ENCODE measurements at regions of chr17 and their contacts with region 1.

Region 1: DNA sequence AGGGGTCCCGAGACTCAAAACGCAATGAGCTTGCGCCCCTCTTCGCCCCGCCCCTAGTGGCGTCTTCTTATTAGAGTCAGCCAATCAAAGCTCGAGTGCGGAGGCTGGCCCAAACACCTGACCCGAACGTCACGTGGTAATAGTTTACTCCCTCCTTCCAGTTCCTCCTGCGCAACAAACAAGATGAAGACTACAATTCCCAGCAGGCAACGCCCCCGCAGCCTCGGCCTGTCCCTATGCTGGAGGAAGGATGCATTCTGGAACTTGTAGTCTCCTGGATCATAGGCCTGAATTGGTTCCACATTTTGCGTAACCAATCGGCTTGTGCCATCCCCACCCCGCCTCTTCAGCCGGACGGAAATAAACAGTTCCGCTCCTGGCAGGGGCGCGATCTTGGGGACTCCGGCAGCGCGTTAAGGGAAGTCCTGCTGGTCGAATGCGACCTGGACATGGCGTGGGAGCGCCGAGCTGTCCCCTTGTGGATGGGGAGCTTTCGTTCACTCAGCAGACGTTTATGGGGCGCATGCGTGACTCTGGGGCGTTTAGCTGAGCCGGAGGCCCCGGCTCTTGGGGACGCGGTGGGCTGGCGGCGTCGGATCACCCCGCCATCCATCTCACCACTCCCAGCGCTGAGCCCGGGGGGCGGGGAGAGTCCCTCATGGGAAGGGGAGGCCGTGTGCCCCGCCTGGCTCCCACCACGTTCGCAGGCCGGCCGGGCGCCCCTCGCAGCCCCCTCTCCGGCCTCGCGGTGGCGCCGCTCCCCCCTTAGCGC is at the start of gene WBP2:
- DNase-seq: peak; percentile 100
- ATAC-seq: peak; percentile 92
- H3K4me3 ChIP-seq: peak within 1 kb of the TSS; percentile 81 to 90 (median 90)
- H3K27ac ChIP-seq: peak within 1 kb of the TSS; percentile 89
- H3K4me1 ChIP-seq: peaks cover 53% of the 10 kb centered on the region
- H3K27me3 ChIP-seq: no peaks in the 10 kb centered on the region; a peak in 1 of 5 replicates
- CTCF ChIP-seq: peak; percentile 80
- EP300 ChIP-seq: peak in 1 of 2 experiments; percentile 63; a peak in 2 of 4 replicates
- POLR2A ChIP-seq: peak; percentile 89 to 99
- RAD21 ChIP-seq: peak; percentile 90
- total RNA-seq, gene WBP2: 28.2 and 29.2 TPM in 2 replicates

Region 2: GRCh38 chr17:75764711-75765421 is 90.6 kb before region 1 on chr17 and contains the start of gene GALK1:
- CTCF ChIA-PET with region 1: no interaction called
- POLR2A ChIA-PET with region 1: interaction called, 28 read pairs
- in situ Hi-C with region 1: no loop called
- intact Hi-C with region 1: no loop called
- DNase-seq: peak; percentile 59
- ATAC-seq: peak; percentile 73
- H3K4me3 ChIP-seq: peak within 1 kb of the TSS; percentile 77 to 87 (median 78)
- H3K27ac ChIP-seq: peak within 1 kb of the TSS; percentile 79
- H3K4me1 ChIP-seq: peaks cover 60% of the 10 kb centered on the region
- H3K27me3 ChIP-seq: no peaks in the 10 kb centered on the region
- CTCF ChIP-seq: peak; percentile 78
- EP300 ChIP-seq: no peak
- POLR2A ChIP-seq: peak in 1 of 2 experiments; percentile 73; a peak in 2 of 4 replicates
- RAD21 ChIP-seq: peak; percentile 46
- total RNA-seq, gene GALK1: 93.6 and 95.6 TPM in 2 replicates

Region 3: DNA sequence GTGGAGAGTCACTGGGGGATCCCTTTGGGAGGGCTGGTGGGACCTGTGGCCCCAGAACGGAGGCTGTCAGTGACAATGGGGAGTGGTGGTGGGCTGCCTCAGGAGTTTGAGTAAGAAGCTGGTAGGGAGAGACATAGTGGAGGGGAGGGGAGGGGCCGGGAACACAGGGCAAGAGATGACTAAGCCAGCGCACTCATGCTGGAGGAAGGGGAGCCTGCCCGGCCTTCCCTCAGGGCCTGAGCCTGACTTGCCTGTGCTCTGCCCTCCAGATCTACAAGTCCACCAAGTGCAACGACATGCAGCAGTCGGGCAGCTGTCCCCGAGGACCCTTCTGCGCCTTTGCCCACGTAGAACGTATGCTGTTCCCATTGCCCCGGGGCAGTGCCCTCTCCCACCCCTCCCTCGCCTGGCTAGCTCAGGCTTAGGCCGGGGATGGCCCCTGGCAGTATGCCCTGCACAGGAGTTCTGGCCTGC is 40.6 kb before region 1 on chr17:
- CTCF ChIA-PET with region 1: no interaction called
- POLR2A ChIA-PET with region 1: no interaction called
- in situ Hi-C with region 1: no loop called
- intact Hi-C with region 1: loop called (anchors 1 kb)
- DNase-seq: no peak
- ATAC-seq: no peak
- H3K4me3 ChIP-seq: no peak overlapping the region
- H3K27ac ChIP-seq: no peak overlapping the region
- H3K4me1 ChIP-seq: no peaks in the 10 kb centered on the region
- H3K27me3 ChIP-seq: no peaks in the 10 kb centered on the region
- CTCF ChIP-seq: no peak
- EP300 ChIP-seq: no peak
- POLR2A ChIP-seq: no peak
- RAD21 ChIP-seq: no peak

Region 4: DNA sequence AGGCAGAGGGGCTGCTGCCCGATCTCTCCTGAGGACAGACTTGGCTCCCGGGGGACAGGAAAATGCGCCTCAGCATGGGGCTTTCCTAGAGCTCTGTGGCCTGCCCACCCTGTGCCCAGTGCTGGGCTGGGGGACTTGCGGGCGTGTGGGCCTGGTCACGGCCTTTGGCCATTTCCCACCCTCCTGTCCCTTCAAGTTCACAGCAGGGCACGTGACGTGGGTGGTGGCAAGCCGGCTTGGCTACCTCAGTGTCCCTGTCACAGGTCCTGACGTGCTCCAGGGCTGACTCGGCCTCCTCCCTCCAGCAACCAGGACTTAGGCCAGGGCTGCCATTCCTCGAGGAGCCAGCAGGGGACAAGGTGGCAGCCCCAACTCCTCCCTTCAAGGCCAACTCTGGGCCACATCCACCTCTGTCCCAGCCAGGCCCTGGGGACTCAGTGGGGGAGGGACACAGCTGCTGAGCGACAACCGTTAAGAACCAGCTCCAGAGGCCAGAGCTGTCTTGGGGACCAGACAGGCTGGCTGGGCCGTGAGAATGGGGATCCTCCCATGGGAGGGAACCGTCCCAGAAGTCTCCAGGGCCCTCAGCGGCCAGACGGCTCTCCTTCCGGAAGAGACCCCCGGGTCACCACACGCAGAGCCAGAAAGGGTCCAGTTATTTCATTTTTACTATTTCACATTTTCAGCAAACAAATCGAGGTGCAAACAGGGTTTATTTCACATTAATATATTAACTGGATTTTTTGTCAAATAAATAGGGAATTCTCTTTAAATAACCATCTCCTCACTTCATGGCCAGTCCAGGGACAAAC is 10.2 kb before region 1 on chr17:
- CTCF ChIA-PET with region 1: interaction called, 7 read pairs
- POLR2A ChIA-PET with region 1: interaction called, 220 read pairs
- in situ Hi-C with region 1: no loop called
- intact Hi-C with region 1: no loop called
- DNase-seq: peak; percentile 86
- ATAC-seq: peak; percentile 65
- H3K4me3 ChIP-seq: peak overlapping the region; percentile 66 to 84 (median 66)
- H3K27ac ChIP-seq: peak overlapping the region; percentile 79
- H3K4me1 ChIP-seq: peaks cover 70% of the 10 kb centered on the region
- H3K27me3 ChIP-seq: no peaks in the 10 kb centered on the region
- CTCF ChIP-seq: peak; percentile 90
- EP300 ChIP-seq: peak in 1 of 2 experiments; percentile 31; a peak in 1 of 4 replicates
- POLR2A ChIP-seq: peak in 1 of 2 experiments; percentile 67; a peak in 2 of 4 replicates
- RAD21 ChIP-seq: peak; percentile 82

Region 5: DNA sequence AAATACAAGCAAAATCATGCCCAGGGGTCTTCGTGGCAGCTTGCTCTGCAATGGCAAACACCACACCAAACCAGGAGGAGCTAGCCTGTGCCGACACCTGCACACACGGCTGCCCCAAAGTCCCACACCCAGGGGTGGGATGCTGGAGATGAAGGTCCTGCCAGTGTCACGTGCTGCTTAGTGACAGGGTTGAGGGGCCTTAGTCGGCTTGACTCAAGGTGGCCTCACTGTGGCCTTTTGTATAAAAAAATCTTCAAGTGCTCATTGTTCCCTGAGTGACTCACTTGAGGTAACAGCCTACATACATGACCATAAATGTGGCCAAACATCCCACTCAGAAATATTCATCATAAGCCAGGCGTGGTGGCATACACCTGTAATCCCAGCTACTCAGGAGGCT is 34.0 kb after region 1 on chr17:
- CTCF ChIA-PET with region 1: no interaction called
- POLR2A ChIA-PET with region 1: interaction called, 46 read pairs
- in situ Hi-C with region 1: no loop called
- intact Hi-C with region 1: loop called (anchors 5 kb)
- DNase-seq: no peak
- ATAC-seq: no peak
- H3K4me3 ChIP-seq: no peak overlapping the region
- H3K27ac ChIP-seq: no peak overlapping the region
- H3K4me1 ChIP-seq: peaks cover 44% of the 10 kb centered on the region
- H3K27me3 ChIP-seq: no peaks in the 10 kb centered on the region
- CTCF ChIP-seq: no peak
- EP300 ChIP-seq: no peak
- POLR2A ChIP-seq: no peak
- RAD21 ChIP-seq: no peak

Region 6: GRCh38 chr17:75904749-75905521 is 49.4 kb after region 1 on chr17 and contains the start of gene MRPL38:
- CTCF ChIA-PET with region 1: no interaction called
- POLR2A ChIA-PET with region 1: interaction called, 25 read pairs
- in situ Hi-C with region 1: no loop called
- intact Hi-C with region 1: no loop called
- DNase-seq: peak; percentile 95
- ATAC-seq: peak; percentile 97
- H3K4me3 ChIP-seq: peak within 1 kb of the TSS; percentile 95 to 100 (median 97)
- H3K27ac ChIP-seq: peak within 1 kb of the TSS; percentile 76
- H3K4me1 ChIP-seq: peaks cover 38% of the 10 kb centered on the region
- H3K27me3 ChIP-seq: no peaks in the 10 kb centered on the region; a peak in 1 of 5 replicates
- CTCF ChIP-seq: peak; percentile 100
- EP300 ChIP-seq: peak in 1 of 2 experiments; percentile 58; a peak in 2 of 4 replicates
- POLR2A ChIP-seq: peak; percentile 75 to 86
- RAD21 ChIP-seq: peak; percentile 100
- total RNA-seq, gene MRPL38: 88.8 and 125 TPM in 2 replicates

Measured in HepG2 (cell line).